Activated CD4-positive, alpha-beta T cell treated with anti-CD3 and anti-CD28 coated beads, Interleukin-2, amount 10 ng/mL, durations not matched to agents 7 days and 5 days (primary cell): ENCODE measurements at regions of chr12 and their contacts with region 1.

Region 1: GRCh38 chr12:112937741-112938719 is at the start of gene OAS3:
- DNase-seq: peak; percentile 77
- H3K4me3 Mint-ChIP-seq: peak within 1 kb of the TSS; percentile 80
- H3K27ac Mint-ChIP-seq: peak within 1 kb of the TSS; percentile 94
- H3K4me1 Mint-ChIP-seq: peaks cover 52% of the 10 kb centered on the region
- H3K27me3 Mint-ChIP-seq: no peaks in the 10 kb centered on the region
- total RNA-seq, gene OAS3: 202 to 204 TPM

Region 2: DNA sequence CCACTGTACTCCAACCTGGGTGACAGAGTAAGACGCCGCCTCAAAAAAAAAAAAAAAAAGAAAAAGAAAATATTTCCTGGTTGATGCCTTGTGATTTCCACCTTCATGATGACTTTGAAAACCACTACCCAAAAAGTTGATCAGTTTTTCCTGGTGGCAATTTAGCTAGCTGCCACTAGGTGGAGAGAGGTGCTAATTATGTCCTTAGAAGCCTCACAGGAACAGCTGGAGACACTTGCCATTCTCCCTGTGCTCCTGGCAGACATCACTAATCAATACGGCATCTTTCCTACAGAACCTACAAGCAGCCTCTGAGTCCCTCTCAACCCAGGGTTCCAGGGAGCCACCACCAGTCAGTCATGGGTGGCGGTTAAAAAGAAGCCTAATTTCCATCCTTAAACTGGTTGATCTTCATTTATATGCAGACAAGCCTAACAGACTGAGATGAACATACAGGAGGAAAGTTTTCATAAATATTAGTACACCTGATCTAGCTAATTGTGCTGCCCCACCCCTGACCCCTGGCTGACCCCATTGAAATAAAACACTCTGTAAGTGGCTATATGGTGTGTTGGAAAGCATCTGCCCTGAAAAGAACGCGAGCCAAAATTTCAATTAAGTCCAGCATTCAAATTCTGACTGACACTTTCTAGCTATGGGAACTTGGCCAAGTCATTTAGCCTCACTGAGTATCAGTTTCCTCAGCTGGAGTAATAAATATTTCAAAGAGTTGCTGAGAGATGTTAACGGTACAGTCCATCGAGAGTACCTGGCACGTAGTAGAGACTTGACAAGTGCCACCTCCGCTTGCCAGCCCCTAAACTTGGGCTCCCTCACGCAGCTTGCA is 37.5 kb before region 1 on chr12:
- CTCF ChIA-PET with region 1: interaction called, 13 read pairs
- POLR2A ChIA-PET with region 1: no interaction called
- DNase-seq: peak; percentile 60
- H3K4me3 Mint-ChIP-seq: no peak overlapping the region
- H3K27ac Mint-ChIP-seq: no peak overlapping the region
- H3K4me1 Mint-ChIP-seq: peaks cover 42% of the 10 kb centered on the region
- H3K27me3 Mint-ChIP-seq: peaks cover 16% of the 10 kb centered on the region

Region 3: GRCh38 chr12:112906712-112907414 is 31.2 kb before region 1 on chr12 and contains the start of gene OAS1:
- CTCF ChIA-PET with region 1: interaction called, 6 read pairs
- POLR2A ChIA-PET with region 1: interaction called, 12 read pairs
- DNase-seq: peak; percentile 75
- H3K4me3 Mint-ChIP-seq: peak within 1 kb of the TSS; percentile 98
- H3K27ac Mint-ChIP-seq: peak within 1 kb of the TSS; percentile 98
- H3K4me1 Mint-ChIP-seq: peaks cover 75% of the 10 kb centered on the region
- H3K27me3 Mint-ChIP-seq: no peaks in the 10 kb centered on the region
- total RNA-seq, gene OAS1: 194 to 197 TPM

Region 4: GRCh38 chr12:112916270-112916669 is 21.8 kb before region 1 on chr12:
- CTCF ChIA-PET with region 1: interaction called, 10 read pairs
- POLR2A ChIA-PET with region 1: interaction called, 3 read pairs
- DNase-seq: no peak
- H3K4me3 Mint-ChIP-seq: no peak overlapping the region
- H3K27ac Mint-ChIP-seq: no peak overlapping the region
- H3K4me1 Mint-ChIP-seq: peaks cover 37% of the 10 kb centered on the region
- H3K27me3 Mint-ChIP-seq: no peaks in the 10 kb centered on the region

Region 5: DNA sequence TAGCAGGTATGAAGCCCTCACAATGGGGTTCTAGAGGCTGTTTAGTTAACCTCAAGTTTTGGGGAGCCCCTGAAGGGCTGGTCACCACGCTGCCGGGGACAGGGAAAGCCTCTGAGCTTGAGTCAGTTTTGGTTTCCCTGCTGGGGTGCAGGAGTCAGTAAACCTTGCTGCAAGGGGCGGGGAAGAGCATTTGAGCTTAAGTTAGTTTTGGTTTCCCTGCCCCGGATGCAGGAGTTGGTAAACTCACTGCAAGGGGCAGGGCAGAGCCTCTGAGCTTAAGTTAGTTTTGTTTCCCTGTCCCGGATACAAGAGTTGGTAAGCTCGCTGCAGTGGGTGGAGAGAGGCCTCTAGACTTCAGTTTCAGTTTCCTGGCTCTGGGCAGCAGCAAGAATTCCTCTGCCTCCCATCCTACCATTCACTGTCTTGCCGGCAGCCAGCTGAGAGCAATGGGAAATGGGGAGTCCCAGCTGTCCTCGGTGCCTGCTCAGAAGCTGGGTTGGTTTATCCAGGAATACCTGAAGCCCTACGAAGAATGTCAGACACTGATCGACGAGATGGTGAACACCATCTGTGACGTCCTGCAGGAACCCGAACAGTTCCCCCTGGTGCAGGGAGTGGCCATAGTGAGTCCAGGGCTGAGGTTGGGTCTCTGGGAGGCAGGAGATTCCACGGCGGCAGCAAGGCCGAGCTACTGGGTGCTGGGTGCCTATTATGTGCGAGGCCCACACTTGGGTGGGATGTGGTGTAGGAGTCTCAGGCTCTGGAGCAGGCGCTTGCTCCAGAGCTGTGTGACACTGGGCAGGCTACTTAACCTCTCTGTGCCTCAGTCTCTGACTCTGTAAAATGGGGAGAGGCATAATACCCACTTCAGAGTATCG is 40.4 kb after region 1 on chr12 and contains the start of gene OAS2:
- CTCF ChIA-PET with region 1: interaction called, 6 read pairs
- POLR2A ChIA-PET with region 1: interaction called, 14 read pairs
- DNase-seq: peak; percentile 94
- H3K4me3 Mint-ChIP-seq: peak within 1 kb of the TSS; percentile 84
- H3K27ac Mint-ChIP-seq: peak within 1 kb of the TSS; percentile 99
- H3K4me1 Mint-ChIP-seq: peaks cover 52% of the 10 kb centered on the region
- H3K27me3 Mint-ChIP-seq: no peaks in the 10 kb centered on the region
- total RNA-seq, gene OAS2: 294 to 420 TPM

Region 6: DNA sequence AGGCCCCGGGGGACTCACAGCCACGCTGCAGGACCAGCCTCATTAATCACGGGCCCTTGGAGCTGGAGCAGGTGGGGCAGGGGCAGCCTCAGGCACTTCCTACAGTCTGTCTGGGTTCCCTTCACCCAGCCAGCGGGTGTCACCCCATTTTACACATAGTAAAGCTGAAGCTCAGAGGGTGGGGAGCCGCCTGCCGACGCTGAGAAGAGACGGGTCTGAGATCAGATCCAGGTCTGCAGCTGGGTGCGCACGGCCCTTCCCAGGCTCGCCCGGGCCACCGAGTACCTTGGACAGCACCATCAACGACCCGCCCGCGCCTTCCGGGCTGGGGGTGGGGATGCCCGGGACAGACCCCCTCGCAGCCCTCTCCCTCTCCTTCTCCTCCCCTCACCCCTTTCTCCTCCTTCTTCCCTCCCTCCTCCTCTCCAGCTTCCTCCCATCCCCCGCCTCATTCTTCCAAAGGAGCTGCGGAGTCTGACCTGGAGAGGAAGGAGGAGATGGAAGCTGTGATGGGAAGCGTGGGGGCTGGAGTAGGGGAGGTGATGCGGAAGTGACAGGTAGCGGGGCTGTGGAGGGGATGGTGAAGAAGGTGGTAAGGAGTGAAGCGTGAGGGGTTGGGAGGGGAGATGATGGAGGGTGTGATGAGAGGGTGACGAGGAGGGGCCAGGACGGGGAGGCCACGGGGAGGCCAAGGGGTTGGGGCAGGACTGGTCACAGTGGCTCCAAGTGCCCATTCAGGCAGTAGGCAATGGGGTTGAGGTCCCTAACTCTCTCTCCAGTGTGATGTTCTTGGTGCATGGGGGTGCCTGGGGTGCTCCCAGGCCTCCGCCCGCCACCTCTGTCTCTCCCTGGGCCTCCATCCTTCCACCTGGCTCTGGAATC is 127.3 kb after region 1 on chr12:
- CTCF ChIA-PET with region 1: no interaction called
- POLR2A ChIA-PET with region 1: no interaction called
- DNase-seq: no peak
- H3K4me3 Mint-ChIP-seq: no peak overlapping the region
- H3K27ac Mint-ChIP-seq: no peak overlapping the region
- H3K4me1 Mint-ChIP-seq: peaks cover 6% of the 10 kb centered on the region
- H3K27me3 Mint-ChIP-seq: no peaks in the 10 kb centered on the region